ENCODE measurements at regions of chr14 and their contacts with region 1.

Region 1: DNA sequence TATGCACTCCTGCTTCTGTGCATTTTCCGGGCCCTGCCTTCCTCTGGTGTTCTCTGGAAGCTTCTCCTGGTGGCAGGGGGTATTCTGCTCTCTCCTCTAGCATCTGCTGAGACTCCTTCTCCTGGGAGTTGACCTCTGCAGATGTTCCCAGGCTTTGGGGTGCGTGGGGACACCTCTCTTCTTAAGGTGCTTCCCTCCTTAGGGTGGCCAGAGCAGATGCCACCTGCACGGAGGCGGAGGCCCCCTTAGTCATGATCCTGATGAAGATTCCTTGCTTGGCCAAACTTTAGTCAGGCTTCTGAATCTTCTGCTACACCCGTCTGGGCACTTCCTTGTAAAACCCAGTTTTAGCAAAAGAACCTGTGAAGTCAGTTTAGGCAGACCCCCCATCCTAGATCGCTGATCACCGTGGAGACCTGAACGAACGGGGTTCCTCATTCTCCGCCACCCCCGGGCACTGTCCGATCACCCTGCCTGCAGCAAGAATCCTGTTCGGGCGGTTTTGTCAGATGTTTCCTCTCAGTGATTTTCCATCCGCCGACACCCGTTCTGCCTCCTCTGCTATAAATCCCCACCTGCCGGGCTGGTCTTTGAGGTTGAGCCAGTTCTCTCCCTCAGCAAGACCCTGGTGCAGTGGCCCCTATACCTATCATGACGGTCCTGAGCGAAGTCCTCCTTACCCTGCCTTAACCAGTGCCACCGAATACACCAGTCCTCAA is 111.9 kb downstream of the CALM1 start:
- DNase-seq: no peak

Region 2: GRCh38 chr14:90495357-90496276 is 13.1 kb before region 1 on chr14:
- intact Hi-C with region 1: loop called in 1 of 2 experiments (anchors 1 kb)
- DNase-seq: peak; percentile 54

Region 3: DNA sequence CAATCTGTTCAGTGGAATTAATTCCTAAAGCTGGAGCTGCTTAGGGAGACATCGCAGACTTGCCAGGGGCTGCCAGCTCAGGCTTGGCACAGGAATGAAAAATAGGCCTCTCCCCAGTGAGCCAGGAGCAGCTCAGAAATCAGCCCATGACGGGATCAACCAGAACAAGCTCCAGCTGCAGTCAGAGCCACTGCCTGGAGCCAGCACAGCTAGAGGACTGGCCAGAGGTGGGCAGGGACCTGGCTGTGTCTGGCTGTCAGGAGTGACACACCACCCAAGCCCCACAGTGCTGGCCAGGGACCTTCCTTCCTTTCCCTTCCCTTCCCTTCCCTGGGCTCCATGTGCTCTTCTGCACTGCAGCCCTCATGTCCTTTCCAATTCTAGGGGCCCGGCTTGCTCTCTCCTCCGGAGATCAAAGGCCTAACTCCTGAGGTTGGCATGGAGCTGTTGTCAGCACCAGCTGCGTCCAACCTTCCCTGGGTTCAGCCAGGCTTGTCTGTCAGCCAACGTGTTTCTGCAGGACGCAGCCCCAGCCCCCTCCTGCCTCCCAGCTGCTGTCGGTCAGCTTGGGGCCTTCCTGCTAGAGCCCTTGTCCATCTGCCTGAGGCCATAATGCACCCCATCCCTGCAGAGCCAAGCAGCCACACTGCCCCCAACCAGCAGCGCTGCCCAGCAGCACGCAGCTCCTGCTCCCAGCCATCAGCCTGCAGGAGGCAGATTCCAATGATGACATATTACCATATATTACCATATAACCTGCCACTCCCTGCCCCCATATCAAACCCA is 37.5 kb after region 1 on chr14:
- intact Hi-C with region 1: no loop called
- DNase-seq: peak; percentile 63